ENCODE measurements at regions of chr10 and their contacts with region 1.

Region 1: DNA sequence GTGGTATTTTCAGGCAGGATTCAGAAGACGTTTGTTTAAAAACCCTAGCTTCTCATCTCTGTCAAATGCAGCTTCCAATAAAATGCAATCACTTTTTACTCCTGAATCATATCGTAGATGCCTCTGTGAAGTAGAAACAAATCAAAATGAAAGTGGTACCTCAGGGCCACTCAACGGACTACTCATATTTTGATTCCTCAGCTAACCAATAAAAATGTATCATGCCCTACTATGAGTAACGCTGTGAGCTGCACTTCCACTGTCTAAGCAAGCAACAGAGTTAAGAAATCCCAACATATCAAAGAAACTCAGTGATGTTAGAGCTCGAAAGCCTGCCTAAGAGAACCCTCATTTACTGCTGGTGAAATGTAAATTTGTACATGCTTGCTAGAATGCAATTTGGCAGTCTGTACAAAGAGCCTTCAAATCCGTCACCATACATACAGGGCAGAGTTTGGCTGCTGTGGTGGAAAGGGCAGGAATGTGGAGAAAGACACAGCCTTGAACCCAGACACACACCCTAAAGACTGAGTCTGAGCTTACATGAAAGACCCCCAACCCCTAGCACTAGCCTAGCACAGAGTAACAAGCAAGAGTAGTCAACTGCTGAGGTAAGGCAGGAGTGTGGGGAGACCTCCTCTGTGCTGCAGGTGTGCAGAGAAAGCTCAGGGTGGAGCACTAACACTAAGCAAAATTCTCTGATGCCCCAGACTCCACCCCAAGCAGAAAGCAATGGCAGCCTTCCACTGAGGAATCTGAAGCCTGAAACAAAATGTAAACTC is 151.5 kb downstream of the ANK3 start:
- DNase-seq: peak; percentile 28
- ATAC-seq: peak; percentile 79
- H3K4me3 ChIP-seq: peak overlapping the region; percentile 49
- H3K27ac ChIP-seq: peak overlapping the region; percentile 65; the same call in 1 of the 2 replicates
- H3K4me1 ChIP-seq: peaks cover 16% of the 10 kb centered on the region
- H3K27me3 ChIP-seq: no peaks in the 10 kb centered on the region
- CTCF ChIP-seq: peak; percentile 38 to 53 (median 48)
- EP300 ChIP-seq: no peak
- POLR2A ChIP-seq: no peak
- RAD21 ChIP-seq: peak; percentile 77

Region 2: DNA sequence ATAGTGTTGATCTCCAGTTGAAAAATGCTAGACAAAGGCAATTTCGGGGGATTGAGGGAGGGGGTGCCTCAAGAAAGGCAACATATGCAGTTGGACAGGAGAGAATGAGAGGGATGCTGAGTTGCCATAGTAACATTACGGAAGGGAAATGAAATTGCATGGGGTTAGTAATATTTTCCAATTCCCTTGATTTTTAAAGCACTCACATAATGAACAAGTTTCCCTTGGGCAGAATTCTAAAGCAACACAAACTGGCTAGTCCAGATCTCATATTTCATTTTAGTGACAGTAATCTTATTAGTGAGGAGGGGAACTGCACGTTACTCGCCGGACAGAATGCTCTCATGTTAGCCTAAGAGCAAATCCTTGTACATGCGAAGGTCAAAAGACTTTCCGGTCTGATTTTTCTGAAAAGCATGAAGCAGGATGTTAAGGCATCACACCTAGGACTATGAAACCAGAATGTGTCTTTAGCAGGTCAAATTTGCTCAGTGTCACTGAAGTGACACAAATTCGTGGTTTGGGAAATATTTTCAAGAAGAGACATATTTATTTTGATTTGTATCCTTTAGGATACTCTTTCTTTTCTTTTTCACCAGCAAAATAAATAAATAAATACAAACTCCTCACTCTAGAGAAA is 14.0 kb before region 1 on chr10:
- CTCF ChIA-PET with region 1: interaction called, 12 read pairs
- POLR2A ChIA-PET with region 1: no interaction called
- RAD21 ChIA-PET with region 1: no interaction called
- SMC1A ChIA-PET with region 1: interaction called, 6 read pairs
- in situ Hi-C with region 1: no loop called
- intact Hi-C with region 1: no loop called
- DNase-seq: no peak
- ATAC-seq: no peak
- H3K4me3 ChIP-seq: no peak overlapping the region
- H3K27ac ChIP-seq: no peak overlapping the region
- H3K4me1 ChIP-seq: no peaks in the 10 kb centered on the region
- H3K27me3 ChIP-seq: peaks cover 0 to 4% of the 10 kb centered on the region in 2 experiments; a peak in 1 of 4 replicates
- CTCF ChIP-seq: no peak
- EP300 ChIP-seq: no peak
- POLR2A ChIP-seq: no peak
- RAD21 ChIP-seq: no peak

Region 3: DNA sequence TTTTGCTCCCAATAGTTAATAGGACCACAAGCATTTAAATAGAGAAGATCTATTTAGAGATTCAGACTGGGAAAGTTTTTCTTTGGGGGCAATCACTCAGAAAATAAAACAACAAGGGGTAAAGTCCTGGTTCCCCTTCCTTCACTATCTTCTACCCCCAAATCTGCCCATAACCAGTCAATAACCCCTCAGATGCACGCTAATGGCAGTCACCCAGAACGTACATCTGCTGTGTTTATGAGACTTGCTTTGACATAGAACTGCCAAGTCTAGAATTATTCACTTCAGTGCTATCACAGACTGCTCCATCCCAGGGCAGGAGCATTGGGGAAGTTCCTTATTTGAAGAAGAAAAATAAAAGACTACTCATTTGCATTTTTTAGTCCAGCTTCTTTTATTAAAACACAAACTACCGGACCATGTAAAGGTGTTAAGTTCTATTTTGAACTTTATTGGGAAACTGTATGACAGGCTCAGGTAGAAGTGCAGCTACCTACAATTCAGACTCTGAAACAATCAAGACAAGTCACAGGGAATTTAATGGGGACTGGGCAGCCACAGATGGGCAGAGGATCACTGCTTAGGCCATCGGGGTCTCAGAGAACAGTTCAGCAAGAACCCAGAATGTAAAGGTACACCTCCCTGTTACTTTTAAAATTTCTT is 113.2 kb after region 1 on chr10:
- CTCF ChIA-PET with region 1: interaction called, 47 read pairs
- POLR2A ChIA-PET with region 1: interaction called, 3 read pairs
- RAD21 ChIA-PET with region 1: interaction called, 9 read pairs
- SMC1A ChIA-PET with region 1: interaction called, 24 read pairs
- in situ Hi-C with region 1: no loop called
- intact Hi-C with region 1: loop called (anchors 2 kb)
- DNase-seq: peak; percentile 40
- ATAC-seq: peak; percentile 85
- H3K4me3 ChIP-seq: no peak overlapping the region; the same call in 1 of the 2 replicates
- H3K27ac ChIP-seq: peak overlapping the region; percentile 45; the same call in 1 of the 2 replicates
- H3K4me1 ChIP-seq: peaks cover 34% of the 10 kb centered on the region
- H3K27me3 ChIP-seq: no peaks in the 10 kb centered on the region
- CTCF ChIP-seq: no peak
- EP300 ChIP-seq: peak; percentile 9 to 73; a peak in 3 of 4 replicates
- POLR2A ChIP-seq: no peak
- RAD21 ChIP-seq: no peak

Region 4: DNA sequence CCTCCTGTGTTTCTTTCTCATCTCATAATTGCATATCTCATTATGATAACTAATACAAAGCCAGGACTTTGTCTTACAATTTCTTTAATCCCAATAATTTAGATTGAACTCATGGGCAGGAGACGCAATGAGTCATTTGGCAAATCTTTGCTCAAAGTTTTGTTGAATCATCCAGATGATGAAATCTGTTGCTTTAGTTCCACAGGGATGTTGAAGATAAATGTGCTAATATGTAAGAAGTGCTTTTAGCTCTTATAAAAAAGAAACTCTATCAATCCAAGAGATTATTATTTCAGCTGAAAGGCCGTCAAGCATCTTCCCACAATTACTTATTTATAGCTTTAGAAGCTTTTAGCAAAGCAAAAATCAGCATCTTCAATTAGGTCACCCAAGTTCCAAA is 188.2 kb after region 1 on chr10:
- CTCF ChIA-PET with region 1: interaction called, 22 read pairs
- POLR2A ChIA-PET with region 1: interaction called, 10 read pairs
- RAD21 ChIA-PET with region 1: interaction called, 17 read pairs
- SMC1A ChIA-PET with region 1: interaction called, 40 read pairs
- in situ Hi-C with region 1: loop called (anchors 5 kb)
- intact Hi-C with region 1: no loop called
- DNase-seq: no peak
- ATAC-seq: no peak
- H3K4me3 ChIP-seq: no peak overlapping the region
- H3K27ac ChIP-seq: no peak overlapping the region
- H3K4me1 ChIP-seq: no peaks in the 10 kb centered on the region
- H3K27me3 ChIP-seq: no peaks in the 10 kb centered on the region
- CTCF ChIP-seq: no peak
- EP300 ChIP-seq: no peak
- POLR2A ChIP-seq: no peak
- RAD21 ChIP-seq: no peak

Region 5: DNA sequence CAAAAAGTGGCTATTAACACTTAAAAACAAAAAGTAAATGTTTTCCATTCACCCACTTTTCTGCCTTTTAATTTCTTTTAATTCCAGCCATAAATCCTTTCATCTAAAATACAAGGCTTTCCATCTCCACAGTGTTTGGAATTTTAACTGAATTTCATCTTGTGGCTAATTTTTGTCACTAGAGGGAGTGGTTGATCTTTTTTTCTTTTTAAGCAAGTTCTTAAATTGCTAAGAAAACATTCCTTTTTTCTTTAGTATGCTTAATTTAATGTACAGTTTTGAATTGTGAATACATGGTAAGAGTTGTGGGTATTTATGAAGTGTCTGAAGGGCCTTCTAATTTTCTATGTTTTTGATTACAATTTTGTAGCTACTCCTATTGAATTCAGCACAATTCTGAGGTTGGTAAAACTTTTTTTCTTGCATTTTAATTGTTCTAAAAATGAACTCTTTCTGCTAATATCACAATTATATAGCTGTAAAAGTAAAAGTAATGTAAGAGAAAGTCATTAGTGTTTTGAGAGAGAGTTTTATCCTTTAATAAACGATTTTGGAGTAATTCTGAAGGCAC is 206.4 kb after region 1 on chr10:
- CTCF ChIA-PET with region 1: interaction called, 24 read pairs
- POLR2A ChIA-PET with region 1: no interaction called
- RAD21 ChIA-PET with region 1: interaction called, 5 read pairs
- SMC1A ChIA-PET with region 1: interaction called, 12 read pairs
- in situ Hi-C with region 1: no loop called
- intact Hi-C with region 1: no loop called
- DNase-seq: no peak
- ATAC-seq: no peak
- H3K4me3 ChIP-seq: no peak overlapping the region
- H3K27ac ChIP-seq: no peak overlapping the region
- H3K4me1 ChIP-seq: no peaks in the 10 kb centered on the region
- H3K27me3 ChIP-seq: no peaks in the 10 kb centered on the region
- CTCF ChIP-seq: no peak; a peak in 1 of 6 replicates
- EP300 ChIP-seq: no peak
- POLR2A ChIP-seq: no peak
- RAD21 ChIP-seq: peak; percentile 30; the same call in 1 of the 2 replicates

Region 6: GRCh38 chr10:60778214-60779029 is 540.3 kb after region 1 on chr10 and contains the start of gene CDK1:
- CTCF ChIA-PET with region 1: no interaction called
- POLR2A ChIA-PET with region 1: no interaction called
- RAD21 ChIA-PET with region 1: no interaction called
- SMC1A ChIA-PET with region 1: no interaction called
- in situ Hi-C with region 1: no loop called
- intact Hi-C with region 1: loop called (anchors 10 kb)
- DNase-seq: peak; percentile 89
- ATAC-seq: peak; percentile 97
- H3K4me3 ChIP-seq: peak within 1 kb of the TSS; percentile 98
- H3K27ac ChIP-seq: peak within 1 kb of the TSS; percentile 82
- H3K4me1 ChIP-seq: peaks cover 3% of the 10 kb centered on the region; the same call in 1 of the 2 replicates
- H3K27me3 ChIP-seq: no peaks in the 10 kb centered on the region
- CTCF ChIP-seq: no peak
- EP300 ChIP-seq: 0 out of 4 replicates have a peak, but pooled peaks of 1 of the 2 experiments have one; percentile 24
- POLR2A ChIP-seq: peak; percentile 91
- RAD21 ChIP-seq: no peak
- polyA plus RNA-seq, gene CDK1: 228 to 361 TPM